ENCODE measurements at regions of chr12 and their contacts with region 1.

Region 1: GRCh38 chr12:64181504-64182291 is 40.4 kb downstream of the KICS2 start:
- DNase-seq: peak; percentile 59 to 84 (median 71)
- H3K4me3 ChIP-seq: peak overlapping the region in 1 of 4 donors; percentile 10
- H3K27ac ChIP-seq: peak overlapping the region; percentile 57 to 83 (median 69)
- H3K4me1 ChIP-seq: peaks cover 9 to 24% of the 10 kb centered on the region in 2 donors
- H3K27me3 ChIP-seq: no peaks in the 10 kb centered on the region
- CTCF ChIP-seq: peak; percentile 43 to 82 (median 66)
- POLR2A ChIP-seq: peak in 1 of 2 donors; percentile 45

Region 2: GRCh38 chr12:64039281-64039871 is 142.3 kb before region 1 on chr12:
- intact Hi-C with region 1: no loop called
- DNase-seq: no peak
- H3K4me3 ChIP-seq: no peak overlapping the region
- H3K27ac ChIP-seq: no peak overlapping the region
- H3K4me1 ChIP-seq: peaks cover 5% of the 10 kb centered on the region in 2 donors
- H3K27me3 ChIP-seq: no peaks in the 10 kb centered on the region
- CTCF ChIP-seq: no peak
- POLR2A ChIP-seq: no peak

Region 3: DNA sequence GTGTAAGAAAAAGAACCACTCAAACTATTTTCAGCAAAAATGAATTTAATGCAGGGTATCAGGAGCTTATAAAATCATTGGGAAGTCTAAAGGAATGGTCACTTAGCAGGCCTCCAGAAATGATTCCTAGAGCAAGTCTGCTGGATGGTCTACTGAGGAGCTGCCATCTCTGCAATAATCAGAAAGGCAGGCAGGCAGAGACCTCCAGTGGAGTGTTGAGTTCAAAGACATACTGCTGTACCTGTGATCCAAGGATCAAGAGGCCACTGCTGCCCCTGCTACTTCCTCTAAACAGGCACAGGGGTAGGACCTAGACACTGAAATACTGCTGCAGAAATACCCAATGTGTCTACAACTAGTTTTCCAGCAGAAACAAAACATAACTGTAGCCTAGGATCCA is 54.9 kb after region 1 on chr12:
- intact Hi-C with region 1: loop called in 1 of 2 experiments (anchors 10 kb)
- DNase-seq: no peak
- H3K4me3 ChIP-seq: no peak overlapping the region
- H3K27ac ChIP-seq: no peak overlapping the region
- H3K4me1 ChIP-seq: peaks cover 0 to 7% of the 10 kb centered on the region in 2 donors
- H3K27me3 ChIP-seq: no peaks in the 10 kb centered on the region
- CTCF ChIP-seq: no peak
- POLR2A ChIP-seq: no peak

Region 4: DNA sequence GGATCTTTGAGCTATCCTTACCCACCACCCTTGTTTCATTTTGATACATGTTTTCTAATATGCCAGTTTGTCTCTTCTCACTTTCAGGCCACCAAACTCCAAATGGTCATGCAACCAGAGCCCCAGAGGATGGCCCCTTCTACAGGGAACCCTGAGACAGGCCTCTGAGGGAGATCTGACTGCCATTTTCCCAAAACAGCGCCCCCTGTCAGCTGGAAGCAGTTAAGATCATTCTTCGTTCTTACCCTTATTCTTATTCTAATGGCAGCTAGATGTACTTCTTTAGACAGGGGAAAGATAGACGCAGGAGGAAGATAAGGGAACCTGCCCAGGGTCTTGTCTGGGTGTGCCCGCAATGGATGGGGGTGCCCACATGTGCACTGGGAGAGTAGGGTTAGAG is 170.5 kb after region 1 on chr12:
- intact Hi-C with region 1: no loop called
- DNase-seq: no peak
- H3K4me3 ChIP-seq: no peak overlapping the region
- H3K27ac ChIP-seq: no peak overlapping the region
- H3K4me1 ChIP-seq: no peaks in the 10 kb centered on the region
- H3K27me3 ChIP-seq: no peaks in the 10 kb centered on the region
- CTCF ChIP-seq: no peak
- POLR2A ChIP-seq: no peak

Measured in adrenal gland (tissue), 19 donors.